ENCODE measurements at regions of chr2 and their contacts with region 1.

Region 1: DNA sequence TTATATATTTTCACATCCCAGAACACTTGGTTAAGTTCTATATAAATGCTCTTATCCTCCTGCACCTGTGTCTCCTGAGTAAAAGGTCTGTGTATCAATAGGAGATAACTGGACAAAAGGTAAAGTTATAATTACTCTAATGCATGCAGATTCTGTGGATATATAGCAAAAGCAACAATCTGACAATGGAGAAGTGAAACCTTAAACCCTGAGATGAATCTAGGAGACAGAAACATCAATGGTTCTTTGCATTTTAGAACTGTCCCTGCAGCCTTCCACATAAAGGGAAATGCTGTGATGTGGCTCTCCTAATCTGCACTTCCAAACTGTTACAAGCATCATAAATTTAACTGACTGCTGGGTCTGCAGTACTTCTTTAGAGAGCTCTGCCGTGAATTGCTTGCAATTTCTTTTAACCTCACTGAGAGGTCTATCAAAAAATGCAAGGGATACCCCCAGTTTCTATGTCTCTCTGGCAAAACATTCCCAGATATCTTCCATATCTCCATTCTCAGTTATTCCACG is 42.8 kb upstream of the FSIP2 start:
- DNase-seq: no peak
- ATAC-seq: no peak

Region 2: GRCh38 chr2:185757356-185757755 is 61.6 kb after region 1 on chr2:
- intact Hi-C with region 1: loop called (anchors 2 kb)
- DNase-seq: no peak
- ATAC-seq: no peak